ENCODE measurements at regions of chr12 and their contacts with region 1.

Region 1: GRCh38 chr12:122946690-122947341 is 19.4 kb downstream of the ABCB9 start:
- DNase-seq: peak; percentile 100

Region 2: GRCh38 chr12:122880668-122881067 is 66.1 kb before region 1 on chr12:
- in situ Hi-C with region 1: loop called (anchors 5 kb)
- DNase-seq: peak; percentile 64

Measured in ACHN (cell line).